Ovary (tissue), 10 donors: ENCODE measurements at regions of chr19 and their contacts with region 1.

Region 1: DNA sequence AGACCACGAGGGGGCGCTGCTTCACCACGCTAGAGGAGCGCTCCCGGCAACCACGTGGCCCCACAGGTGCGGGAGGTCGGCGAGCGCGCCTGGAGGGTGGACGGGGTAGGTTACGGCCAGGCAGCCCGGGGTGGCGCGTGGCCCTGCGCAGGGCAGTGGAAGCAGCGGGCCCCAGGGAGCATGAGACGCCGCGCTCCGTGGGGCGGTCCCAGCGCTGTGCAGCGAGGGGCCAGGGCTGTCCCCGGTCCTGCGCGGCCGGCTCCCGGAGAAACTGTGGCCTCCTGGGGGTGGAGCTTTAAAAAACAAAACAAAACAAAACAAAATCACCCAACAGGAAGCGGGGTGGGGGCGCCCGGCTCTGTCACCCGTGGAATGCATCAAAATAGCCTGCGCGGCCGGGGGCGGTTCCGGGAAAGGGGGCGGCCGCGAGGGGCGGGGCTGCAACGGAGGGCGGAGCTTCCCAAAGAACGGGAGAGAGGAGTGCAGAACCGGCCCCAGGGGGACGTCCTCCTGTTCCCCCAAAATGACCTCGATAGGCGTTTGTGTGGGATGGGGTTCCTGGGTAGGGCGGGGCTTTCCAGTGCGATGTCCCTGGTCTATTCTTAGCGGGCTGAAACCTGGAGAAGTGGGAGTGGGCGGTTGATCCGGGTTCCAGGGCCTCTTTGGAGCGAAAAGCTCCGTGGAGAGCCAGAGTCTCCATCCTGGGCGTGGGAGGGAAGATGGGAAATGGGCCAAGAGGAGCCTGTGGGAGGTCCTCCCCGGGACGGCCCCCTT is 27.3 kb downstream of the NUMBL start:
- DNase-seq: peak; percentile 93 to 97 (median 96)
- H3K4me3 ChIP-seq: peak overlapping the region; percentile 66
- H3K27ac ChIP-seq: peak overlapping the region; percentile 65 to 82
- H3K4me1 ChIP-seq: peaks cover 8% of the 10 kb centered on the region
- H3K27me3 ChIP-seq: no peaks in the 10 kb centered on the region
- CTCF ChIP-seq: peak; percentile 97 to 100 (median 100)
- EP300 ChIP-seq: peak; percentile 74
- POLR2A ChIP-seq: peak; percentile 46

Region 2: GRCh38 chr19:40716655-40717324 is 53.7 kb after region 1 on chr19 and contains the starts of genes COQ8B and ITPKC:
- intact Hi-C with region 1: loop called in 1 of 4 experiments (anchors 5 kb)
- DNase-seq: peak; percentile 99 to 100 (median 100)
- H3K4me3 ChIP-seq: peak within 1 kb of the TSS; percentile 86
- H3K27ac ChIP-seq: peak within 1 kb of the TSS; percentile 95 to 96
- H3K4me1 ChIP-seq: peaks cover 12% of the 10 kb centered on the region
- H3K27me3 ChIP-seq: no peaks in the 10 kb centered on the region
- CTCF ChIP-seq: peak in 2 of 3 donors; percentile 58 to 73
- EP300 ChIP-seq: peak; percentile 54
- POLR2A ChIP-seq: peak; percentile 89
- total RNA-seq, gene COQ8B: 24.0 to 51.2 (median 42.5) TPM
- total RNA-seq, gene ITPKC: 14.2 to 117 (median 22.4) TPM

Region 3: DNA sequence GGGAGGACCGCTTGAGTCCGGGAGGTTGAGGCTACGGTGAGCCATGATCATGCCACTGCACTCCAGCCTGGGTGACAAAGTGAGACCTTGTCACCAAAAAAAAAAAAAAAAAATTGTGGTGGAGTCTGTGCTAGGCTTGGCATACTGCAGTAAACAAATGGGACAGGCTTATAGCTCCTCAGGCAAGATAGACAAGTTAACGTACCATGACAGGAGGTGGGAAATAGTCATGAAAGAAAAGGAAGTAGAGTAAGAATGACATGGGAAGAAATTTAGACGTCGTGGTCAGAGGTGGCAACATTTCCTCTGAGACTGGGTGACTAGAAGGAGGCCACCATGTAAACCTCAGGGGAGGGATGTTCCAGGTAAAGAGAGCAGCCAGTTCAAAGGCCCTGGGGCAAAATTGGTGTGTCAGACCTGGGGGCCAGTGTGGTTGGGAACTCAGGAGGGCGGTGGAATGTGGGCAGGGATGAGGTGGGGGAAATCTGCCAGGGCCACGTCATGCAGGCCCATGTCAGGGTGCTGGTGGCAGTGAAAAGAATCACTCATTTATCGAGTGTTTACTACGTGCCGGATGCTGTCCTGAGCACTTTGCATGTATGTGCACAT is 93.5 kb after region 1 on chr19:
- intact Hi-C with region 1: no loop called
- DNase-seq: no peak
- H3K4me3 ChIP-seq: no peak overlapping the region
- H3K27ac ChIP-seq: no peak overlapping the region
- H3K4me1 ChIP-seq: peaks cover 13% of the 10 kb centered on the region
- H3K27me3 ChIP-seq: no peaks in the 10 kb centered on the region
- CTCF ChIP-seq: no peak
- EP300 ChIP-seq: no peak
- POLR2A ChIP-seq: no peak

Region 4: GRCh38 chr19:40806488-40807468 is 143.7 kb after region 1 on chr19:
- intact Hi-C with region 1: loop called in 2 of 4 experiments (anchors 5 kb)
- DNase-seq: peak; percentile 72 to 86 (median 83)
- H3K4me3 ChIP-seq: no peak overlapping the region
- H3K27ac ChIP-seq: peak overlapping the region; percentile 27 to 39
- H3K4me1 ChIP-seq: peaks cover 41% of the 10 kb centered on the region
- H3K27me3 ChIP-seq: no peaks in the 10 kb centered on the region
- CTCF ChIP-seq: peak; percentile 55 to 84 (median 64)
- EP300 ChIP-seq: peak; percentile 48
- POLR2A ChIP-seq: peak; percentile 16

Region 5: DNA sequence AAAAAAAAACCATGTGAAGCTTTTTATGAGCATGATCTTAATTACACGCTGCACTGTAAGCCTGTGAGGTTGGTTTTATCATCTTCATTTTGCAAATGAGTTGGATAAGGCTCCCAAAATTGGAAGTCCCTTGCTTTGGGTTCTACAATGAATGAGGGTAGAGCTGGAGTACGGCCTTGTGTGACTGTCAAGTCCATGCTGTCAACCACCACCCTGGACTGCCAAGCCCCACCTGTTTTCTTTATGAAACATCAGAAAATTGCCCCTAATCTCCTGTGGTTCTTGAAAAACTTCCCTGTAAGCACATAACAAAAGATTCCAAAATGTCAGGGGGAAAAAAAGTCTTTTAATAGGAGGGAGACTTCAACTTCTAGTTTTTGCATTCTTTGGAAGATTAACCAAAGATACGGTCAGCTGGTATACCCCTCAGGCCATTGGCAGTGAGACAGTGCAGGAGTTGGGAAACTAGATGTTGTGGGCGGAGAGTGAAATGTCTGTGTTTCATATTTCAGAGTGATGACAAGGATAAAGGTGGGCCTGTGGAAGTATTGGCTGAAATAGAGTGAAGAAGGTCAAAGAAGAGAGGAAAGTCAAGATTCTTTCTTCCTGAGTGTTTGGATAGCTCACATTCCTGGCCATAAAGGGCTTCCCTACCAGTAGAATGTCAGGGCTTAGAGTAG is 368.7 kb after region 1 on chr19:
- intact Hi-C with region 1: loop called in 1 of 4 experiments (anchors 10 kb)
- DNase-seq: no peak
- H3K4me3 ChIP-seq: no peak overlapping the region
- H3K27ac ChIP-seq: no peak overlapping the region
- H3K4me1 ChIP-seq: no peaks in the 10 kb centered on the region
- H3K27me3 ChIP-seq: no peaks in the 10 kb centered on the region
- CTCF ChIP-seq: no peak
- EP300 ChIP-seq: no peak
- POLR2A ChIP-seq: no peak

Region 6: GRCh38 chr19:41144403-41144802 is 481.3 kb after region 1 on chr19:
- intact Hi-C with region 1: loop called in 2 of 4 experiments (anchors 2 to 5 kb)
- DNase-seq: peak; percentile 66 to 76 (median 74)
- H3K4me3 ChIP-seq: no peak overlapping the region
- H3K27ac ChIP-seq: no peak overlapping the region
- H3K4me1 ChIP-seq: no peaks in the 10 kb centered on the region
- H3K27me3 ChIP-seq: no peaks in the 10 kb centered on the region
- CTCF ChIP-seq: peak in 2 of 3 donors; percentile 21 to 53
- EP300 ChIP-seq: no peak
- POLR2A ChIP-seq: no peak